CD4-positive, alpha-beta T cell (primary cell): ENCODE measurements at regions of chr13 and their contacts with region 1.

Region 1: GRCh38 chr13:36999054-36999714 is at the start of gene ALG5:
- DNase-seq: peak; percentile 87 to 98 (median 92)
- ATAC-seq: peak; percentile 62
- H3K4me3 ChIP-seq: peak within 1 kb of the TSS; percentile 95
- H3K4me3 Mint-ChIP-seq: peak within 1 kb of the TSS; percentile 96
- H3K27ac ChIP-seq: peak within 1 kb of the TSS; percentile 98 to 99
- H3K27ac Mint-ChIP-seq: peak within 1 kb of the TSS; percentile 99
- H3K4me1 ChIP-seq: peaks cover 12% of the 10 kb centered on the region
- H3K4me1 Mint-ChIP-seq: peaks cover 47% of the 10 kb centered on the region
- H3K27me3 ChIP-seq: no peaks in the 10 kb centered on the region
- H3K27me3 Mint-ChIP-seq: peaks cover 5% of the 10 kb centered on the region
- CTCF ChIP-seq: peak; percentile 97
- total RNA-seq, gene ALG5: 14.4 to 15.1 TPM

Region 2: GRCh38 chr13:36818804-36819738 is 180.1 kb before region 1 on chr13 and contains the start of gene RFXAP:
- CTCF ChIA-PET with region 1: interaction called, 3 read pairs
- POLR2A ChIA-PET with region 1: interaction called, 4 read pairs
- intact Hi-C with region 1: loop called (anchors 5 kb)
- DNase-seq: peak; percentile 83 to 96 (median 90)
- ATAC-seq: peak; percentile 89
- H3K4me3 ChIP-seq: peak within 1 kb of the TSS; percentile 83
- H3K4me3 Mint-ChIP-seq: peak within 1 kb of the TSS; percentile 89
- H3K27ac ChIP-seq: peak within 1 kb of the TSS; percentile 38 to 53
- H3K27ac Mint-ChIP-seq: peak within 1 kb of the TSS; percentile 90
- H3K4me1 ChIP-seq: peaks cover 29% of the 10 kb centered on the region
- H3K4me1 Mint-ChIP-seq: peaks cover 56% of the 10 kb centered on the region
- H3K27me3 ChIP-seq: no peaks in the 10 kb centered on the region
- H3K27me3 Mint-ChIP-seq: peaks cover 7% of the 10 kb centered on the region
- CTCF ChIP-seq: peak; percentile 28
- total RNA-seq, gene RFXAP: 5.8 to 6.0 TPM

Region 3: GRCh38 chr13:36986462-36987240 is 12.5 kb before region 1 on chr13:
- CTCF ChIA-PET with region 1: interaction called, 4 read pairs
- POLR2A ChIA-PET with region 1: interaction called, 22 read pairs
- intact Hi-C with region 1: no loop called
- DNase-seq: no peak
- ATAC-seq: no peak
- H3K4me3 ChIP-seq: no peak overlapping the region
- H3K4me3 Mint-ChIP-seq: no peak overlapping the region
- H3K27ac ChIP-seq: no peak overlapping the region
- H3K27ac Mint-ChIP-seq: no peak overlapping the region
- H3K4me1 ChIP-seq: no peaks in the 10 kb centered on the region
- H3K4me1 Mint-ChIP-seq: no peaks in the 10 kb centered on the region
- H3K27me3 ChIP-seq: no peaks in the 10 kb centered on the region
- H3K27me3 Mint-ChIP-seq: no peaks in the 10 kb centered on the region
- CTCF ChIP-seq: no peak

Region 4: GRCh38 chr13:37023871-37024270 is 24.7 kb after region 1 on chr13:
- CTCF ChIA-PET with region 1: no interaction called
- POLR2A ChIA-PET with region 1: interaction called, 13 read pairs
- intact Hi-C with region 1: no loop called
- DNase-seq: no peak
- ATAC-seq: no peak
- H3K4me3 ChIP-seq: no peak overlapping the region
- H3K4me3 Mint-ChIP-seq: no peak overlapping the region
- H3K27ac ChIP-seq: no peak overlapping the region
- H3K27ac Mint-ChIP-seq: peak overlapping the region; percentile 30
- H3K4me1 ChIP-seq: no peaks in the 10 kb centered on the region
- H3K4me1 Mint-ChIP-seq: no peaks in the 10 kb centered on the region
- H3K27me3 ChIP-seq: no peaks in the 10 kb centered on the region
- H3K27me3 Mint-ChIP-seq: no peaks in the 10 kb centered on the region
- CTCF ChIP-seq: no peak

Region 5: DNA sequence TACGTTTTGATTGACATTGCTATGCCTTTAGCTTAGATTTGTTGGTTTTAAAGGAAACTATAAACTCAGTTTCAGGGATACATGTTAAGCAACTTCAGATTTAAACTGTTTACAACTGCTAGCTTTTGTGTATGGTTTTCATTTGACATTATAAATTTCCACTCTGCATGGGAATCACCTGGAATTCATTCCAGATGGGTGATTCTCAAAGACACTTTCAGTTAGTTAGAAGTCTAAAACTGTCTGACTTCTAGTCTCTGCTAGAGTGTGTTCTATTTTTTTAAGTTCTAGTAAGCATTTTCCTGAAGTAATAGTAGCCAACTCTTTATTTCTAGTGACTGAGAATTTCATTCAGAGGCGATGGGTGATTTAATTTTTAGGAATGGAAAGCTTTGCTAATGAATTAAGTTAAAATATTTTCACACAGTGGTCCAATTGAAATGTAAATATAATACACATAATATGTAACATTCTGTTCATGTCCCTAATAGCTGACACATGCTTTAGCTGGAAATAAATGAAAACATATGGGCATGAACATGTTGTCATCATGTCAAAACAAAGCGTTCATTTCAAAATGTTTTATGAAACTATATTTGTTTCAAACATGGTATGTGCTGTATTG is 164.6 kb after region 1 on chr13:
- CTCF ChIA-PET with region 1: no interaction called
- POLR2A ChIA-PET with region 1: no interaction called
- intact Hi-C with region 1: no loop called
- DNase-seq: no peak
- ATAC-seq: no peak
- H3K4me3 ChIP-seq: no peak overlapping the region
- H3K4me3 Mint-ChIP-seq: no peak overlapping the region
- H3K27ac ChIP-seq: no peak overlapping the region
- H3K27ac Mint-ChIP-seq: no peak overlapping the region
- H3K4me1 ChIP-seq: no peaks in the 10 kb centered on the region
- H3K4me1 Mint-ChIP-seq: no peaks in the 10 kb centered on the region
- H3K27me3 ChIP-seq: no peaks in the 10 kb centered on the region
- H3K27me3 Mint-ChIP-seq: no peaks in the 10 kb centered on the region
- CTCF ChIP-seq: no peak

Region 6: DNA sequence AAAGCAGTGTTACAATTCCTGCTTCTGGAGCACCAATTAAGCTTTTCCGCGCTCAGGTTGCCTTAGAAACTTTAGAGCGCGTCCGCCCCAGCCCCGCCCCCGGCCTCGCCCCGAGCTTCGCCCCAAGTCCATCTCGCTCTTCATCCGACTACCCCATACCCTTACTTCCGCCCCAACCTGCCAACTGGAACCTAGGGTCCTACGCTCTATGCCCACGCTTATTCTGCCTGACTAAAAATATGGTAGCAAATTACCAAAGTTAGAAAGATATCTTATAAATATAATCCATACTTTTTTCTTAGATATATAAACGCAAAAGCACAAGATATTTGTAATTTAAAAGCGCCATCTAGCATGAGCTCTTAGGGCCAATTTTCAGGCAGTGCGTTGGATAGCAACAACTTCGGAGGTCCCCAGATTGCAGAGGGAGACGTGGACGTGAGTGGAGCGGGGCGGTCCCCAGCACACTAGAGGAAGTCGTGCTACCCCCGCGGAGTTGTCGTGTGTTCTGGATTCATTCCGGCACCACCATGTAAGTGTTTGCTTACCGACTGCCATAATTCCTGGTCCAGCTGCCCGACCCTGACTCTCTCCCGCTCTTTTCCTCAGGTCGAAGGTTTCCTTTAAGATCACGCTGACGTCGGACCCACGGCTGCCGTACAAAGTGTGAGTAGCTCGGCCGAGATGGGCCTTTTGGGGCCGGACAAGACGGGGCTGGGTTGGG is 1350.4 kb after region 1 on chr13 and contains the start of gene UFM1:
- CTCF ChIA-PET with region 1: no interaction called
- POLR2A ChIA-PET with region 1: interaction called, 16 read pairs
- intact Hi-C with region 1: loop called in 1 of 2 experiments (anchors 5 kb)
- DNase-seq: peak; percentile 74 to 96 (median 82)
- ATAC-seq: peak; percentile 93
- H3K4me3 ChIP-seq: peak within 1 kb of the TSS; percentile 92
- H3K4me3 Mint-ChIP-seq: peak within 1 kb of the TSS; percentile 98
- H3K27ac ChIP-seq: peak within 1 kb of the TSS; percentile 75 to 94
- H3K27ac Mint-ChIP-seq: peak within 1 kb of the TSS; percentile 97
- H3K4me1 ChIP-seq: peaks cover 8% of the 10 kb centered on the region
- H3K4me1 Mint-ChIP-seq: peaks cover 41% of the 10 kb centered on the region
- H3K27me3 ChIP-seq: no peaks in the 10 kb centered on the region
- H3K27me3 Mint-ChIP-seq: no peaks in the 10 kb centered on the region
- CTCF ChIP-seq: no peak
- total RNA-seq, gene UFM1: 68.7 to 70.3 TPM